B cell (primary cell): ENCODE measurements at regions of chr3 and their contacts with region 1.

Region 1: GRCh38 chr3:150763122-150763841 is at the start of gene SIAH2:
- DNase-seq: peak; percentile 95
- ATAC-seq: peak; percentile 74
- H3K4me3 ChIP-seq: peak within 1 kb of the TSS; percentile 74 to 91 (median 86)
- H3K4me3 Mint-ChIP-seq: peak within 1 kb of the TSS; percentile 99
- H3K27ac ChIP-seq: peak within 1 kb of the TSS; percentile 95 to 96
- H3K27ac Mint-ChIP-seq: peak within 1 kb of the TSS; percentile 99
- H3K4me1 ChIP-seq: peaks cover 51 to 56% of the 10 kb centered on the region in 2 donors
- H3K4me1 Mint-ChIP-seq: peaks cover 63% of the 10 kb centered on the region
- H3K27me3 ChIP-seq: peaks cover 0 to 2% (median 0%) of the 10 kb centered on the region in 4 experiments
- H3K27me3 Mint-ChIP-seq: peaks cover 4% of the 10 kb centered on the region
- CTCF ChIP-seq: no peak
- total RNA-seq, gene SIAH2: 22.3 and 22.5 TPM in 2 replicates

Region 2: GRCh38 chr3:149969940-149970715 is 793.2 kb before region 1 on chr3:
- CTCF ChIA-PET with region 1: no interaction called
- POLR2A ChIA-PET with region 1: no interaction called
- intact Hi-C with region 1: loop called (anchors 5 kb)
- DNase-seq: peak; percentile 87
- ATAC-seq: peak; percentile 71
- H3K4me3 ChIP-seq: peak overlapping the region; percentile 35 to 78 (median 67)
- H3K4me3 Mint-ChIP-seq: peak overlapping the region; percentile 96
- H3K27ac ChIP-seq: no peak overlapping the region
- H3K27ac Mint-ChIP-seq: peak overlapping the region; percentile 83
- H3K4me1 ChIP-seq: peaks cover 14% of the 10 kb centered on the region in 2 donors
- H3K4me1 Mint-ChIP-seq: peaks cover 22% of the 10 kb centered on the region
- H3K27me3 ChIP-seq: peaks cover 0 to 15% (median 14%) of the 10 kb centered on the region in 4 experiments
- H3K27me3 Mint-ChIP-seq: peaks cover 27% of the 10 kb centered on the region
- CTCF ChIP-seq: no peak

Region 3: GRCh38 chr3:150603153-150603979 is 159.9 kb before region 1 on chr3 and contains the start of gene SELENOT:
- CTCF ChIA-PET with region 1: no interaction called
- POLR2A ChIA-PET with region 1: interaction called, 4 read pairs
- intact Hi-C with region 1: loop called (anchors 1 kb)
- DNase-seq: peak; percentile 97
- ATAC-seq: peak; percentile 70
- H3K4me3 ChIP-seq: peak within 1 kb of the TSS; percentile 66 to 90 (median 87)
- H3K4me3 Mint-ChIP-seq: peak within 1 kb of the TSS; percentile 95
- H3K27ac ChIP-seq: peak within 1 kb of the TSS; percentile 99 to 100
- H3K27ac Mint-ChIP-seq: peak within 1 kb of the TSS; percentile 100
- H3K4me1 ChIP-seq: peaks cover 66 to 69% of the 10 kb centered on the region in 2 donors
- H3K4me1 Mint-ChIP-seq: peaks cover 84% of the 10 kb centered on the region
- H3K27me3 ChIP-seq: no peaks in the 10 kb centered on the region
- H3K27me3 Mint-ChIP-seq: no peaks in the 10 kb centered on the region
- CTCF ChIP-seq: peak; percentile 38
- total RNA-seq, gene SELENOT: 73.1 and 76.7 TPM in 2 replicates

Region 4: DNA sequence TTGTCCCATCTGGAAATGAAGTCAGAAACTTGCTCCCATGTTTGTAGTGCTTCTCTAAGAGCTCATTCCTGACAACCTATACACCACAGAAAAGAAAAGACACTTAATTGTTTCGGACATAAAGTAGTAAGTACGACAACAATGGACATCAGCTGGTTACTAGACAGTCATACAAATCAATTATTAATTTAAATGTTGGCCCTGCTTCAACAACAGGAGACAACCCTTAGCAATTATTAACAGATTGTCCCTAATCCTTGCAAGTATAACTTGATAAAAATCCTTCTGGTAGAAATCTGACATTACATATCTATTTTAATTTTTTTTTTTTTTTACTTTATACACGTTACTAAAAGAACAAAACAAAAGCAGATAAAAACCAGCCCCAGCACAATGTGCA is 89.3 kb before region 1 on chr3:
- CTCF ChIA-PET with region 1: no interaction called
- POLR2A ChIA-PET with region 1: no interaction called
- intact Hi-C with region 1: no loop called
- DNase-seq: no peak
- ATAC-seq: no peak
- H3K4me3 ChIP-seq: no peak overlapping the region
- H3K4me3 Mint-ChIP-seq: no peak overlapping the region
- H3K27ac ChIP-seq: no peak overlapping the region
- H3K27ac Mint-ChIP-seq: no peak overlapping the region
- H3K4me1 ChIP-seq: no peaks in the 10 kb centered on the region
- H3K4me1 Mint-ChIP-seq: no peaks in the 10 kb centered on the region
- H3K27me3 ChIP-seq: no peaks in the 10 kb centered on the region
- H3K27me3 Mint-ChIP-seq: no peaks in the 10 kb centered on the region
- CTCF ChIP-seq: no peak

Region 5: DNA sequence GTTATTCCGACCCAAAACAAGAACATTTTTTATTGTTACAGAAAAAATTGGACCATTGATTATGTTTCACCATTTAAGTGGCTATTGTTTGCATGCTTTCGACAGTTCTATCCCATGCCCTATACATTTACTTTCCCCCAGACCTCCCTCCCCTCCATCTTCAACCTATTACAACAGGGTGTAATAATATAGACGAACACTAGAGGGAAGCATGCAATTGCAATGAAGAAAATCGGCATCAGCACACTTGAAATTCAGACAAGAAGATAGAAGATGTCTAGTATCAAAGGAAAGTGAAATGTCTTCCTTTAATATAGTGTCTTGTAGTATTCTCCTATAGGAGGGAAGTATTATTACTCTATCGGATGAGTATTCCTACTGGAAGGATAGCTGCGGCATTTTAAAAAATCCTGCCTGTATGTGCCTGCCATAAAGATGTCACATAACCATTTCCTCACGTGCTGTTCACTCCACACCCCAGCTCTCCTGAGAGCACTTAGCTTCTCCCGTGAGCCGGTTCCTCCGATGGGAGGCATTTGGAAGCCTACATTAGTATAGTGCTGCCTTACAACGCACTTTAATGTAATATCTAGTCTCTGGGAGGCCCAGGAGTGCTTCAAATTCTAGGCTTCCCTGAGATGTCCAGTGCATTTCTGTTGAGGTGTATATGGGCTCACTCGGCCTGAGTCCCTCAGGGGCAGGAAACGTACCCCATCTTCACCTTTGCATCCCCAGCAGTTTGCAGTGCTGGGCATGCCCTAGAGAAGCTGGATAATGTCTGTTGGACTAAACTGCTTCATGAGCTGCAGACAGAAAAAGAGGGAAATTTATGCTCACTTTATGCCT is 41.8 kb before region 1 on chr3:
- CTCF ChIA-PET with region 1: interaction called, 32 read pairs
- POLR2A ChIA-PET with region 1: no interaction called
- intact Hi-C with region 1: loop called (anchors 1 kb)
- DNase-seq: peak; percentile 82
- ATAC-seq: peak; percentile 95
- H3K4me3 ChIP-seq: no peak overlapping the region
- H3K4me3 Mint-ChIP-seq: no peak overlapping the region
- H3K27ac ChIP-seq: no peak overlapping the region
- H3K27ac Mint-ChIP-seq: no peak overlapping the region
- H3K4me1 ChIP-seq: peaks cover 0 to 5% of the 10 kb centered on the region in 2 donors
- H3K4me1 Mint-ChIP-seq: peaks cover 2% of the 10 kb centered on the region
- H3K27me3 ChIP-seq: no peaks in the 10 kb centered on the region
- H3K27me3 Mint-ChIP-seq: no peaks in the 10 kb centered on the region
- CTCF ChIP-seq: peak; percentile 89

Region 6: GRCh38 chr3:150787741-150788370 is 24.6 kb after region 1 on chr3:
- CTCF ChIA-PET with region 1: interaction called, 20 read pairs
- POLR2A ChIA-PET with region 1: no interaction called
- intact Hi-C with region 1: loop called (anchors 2 kb)
- DNase-seq: peak; percentile 81
- ATAC-seq: peak; percentile 87
- H3K4me3 ChIP-seq: peak overlapping the region in 1 of 5 experiments; percentile 17
- H3K4me3 Mint-ChIP-seq: no peak overlapping the region
- H3K27ac ChIP-seq: no peak overlapping the region
- H3K27ac Mint-ChIP-seq: no peak overlapping the region
- H3K4me1 ChIP-seq: no peaks in the 10 kb centered on the region
- H3K4me1 Mint-ChIP-seq: peaks cover 6% of the 10 kb centered on the region
- H3K27me3 ChIP-seq: peaks cover 0 to 5% (median 1%) of the 10 kb centered on the region in 4 experiments
- H3K27me3 Mint-ChIP-seq: peaks cover 16% of the 10 kb centered on the region
- CTCF ChIP-seq: peak; percentile 95

Region 7: DNA sequence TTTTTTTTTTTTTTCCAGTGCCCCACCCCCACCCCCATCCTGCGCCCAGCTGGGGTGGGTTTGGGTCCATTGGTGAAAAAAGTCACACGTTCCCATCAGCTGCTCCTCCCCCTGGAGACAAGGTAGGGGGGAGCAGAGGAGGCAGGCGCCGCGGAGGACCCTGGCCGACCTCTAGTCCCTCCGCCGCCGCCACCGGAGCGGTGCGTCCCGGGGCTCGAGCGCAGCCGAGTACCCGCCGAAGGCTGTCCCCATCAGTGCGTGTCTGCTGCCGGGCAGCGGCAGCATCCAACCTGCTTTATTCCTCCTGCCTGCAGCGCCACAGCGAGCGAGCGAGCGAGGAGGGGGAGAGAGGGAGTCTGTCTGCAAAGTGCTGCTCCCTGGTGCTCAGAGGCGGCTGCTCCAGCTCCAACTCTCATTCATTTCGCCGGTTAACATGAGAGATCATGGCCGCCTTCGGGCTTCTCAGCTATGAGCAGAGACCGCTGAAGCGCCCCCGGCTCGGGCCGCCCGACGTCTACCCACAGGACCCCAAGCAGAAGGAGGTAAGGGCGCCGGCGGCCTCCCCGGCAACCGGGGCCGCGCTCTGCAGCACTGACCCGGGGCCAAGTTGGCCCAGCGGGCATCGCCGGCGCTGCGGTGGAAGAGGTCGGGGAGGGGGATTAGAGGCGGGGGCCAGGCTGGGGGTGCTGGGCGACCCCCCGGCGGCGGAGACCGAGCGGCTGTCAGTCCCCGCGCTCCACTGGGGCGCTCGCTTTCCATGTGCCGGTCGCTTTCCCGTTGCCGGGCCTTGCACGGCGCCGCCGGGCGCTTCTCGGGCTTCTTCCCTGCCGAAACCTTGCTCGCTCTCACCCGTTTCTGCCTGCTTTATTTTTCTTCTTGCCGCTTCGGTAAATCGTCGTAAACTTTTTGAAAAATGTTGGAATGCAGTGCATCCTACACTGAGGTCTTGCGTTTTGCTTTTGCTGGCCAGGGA is 323.5 kb after region 1 on chr3:
- CTCF ChIA-PET with region 1: no interaction called
- POLR2A ChIA-PET with region 1: no interaction called
- intact Hi-C with region 1: loop called (anchors 10 kb)
- DNase-seq: peak; percentile 71
- ATAC-seq: peak; percentile 67
- H3K4me3 ChIP-seq: peak overlapping the region; percentile 17 to 64 (median 54)
- H3K4me3 Mint-ChIP-seq: peak overlapping the region; percentile 90
- H3K27ac ChIP-seq: no peak overlapping the region
- H3K27ac Mint-ChIP-seq: peak overlapping the region; percentile 61
- H3K4me1 ChIP-seq: peaks cover 15 to 20% of the 10 kb centered on the region in 2 donors
- H3K4me1 Mint-ChIP-seq: peaks cover 15% of the 10 kb centered on the region
- H3K27me3 ChIP-seq: peaks cover 0 to 55% (median 28%) of the 10 kb centered on the region in 4 experiments
- H3K27me3 Mint-ChIP-seq: peaks cover 42% of the 10 kb centered on the region
- CTCF ChIP-seq: no peak

Region 8: GRCh38 chr3:151384741-151385174 is 621.5 kb after region 1 on chr3 and contains the start of gene P2RY12:
- CTCF ChIA-PET with region 1: no interaction called
- POLR2A ChIA-PET with region 1: interaction called, 3 read pairs
- intact Hi-C with region 1: loop called (anchors 5 kb)
- DNase-seq: peak; percentile 62
- ATAC-seq: peak; percentile 24
- H3K4me3 ChIP-seq: peak within 1 kb of the TSS in 4 of 5 experiments; percentile 18 to 53 (median 35)
- H3K4me3 Mint-ChIP-seq: peak within 1 kb of the TSS; percentile 81
- H3K27ac ChIP-seq: peak within 1 kb of the TSS; percentile 59 to 87
- H3K27ac Mint-ChIP-seq: peak within 1 kb of the TSS; percentile 85
- H3K4me1 ChIP-seq: peaks cover 55 to 63% of the 10 kb centered on the region in 2 donors
- H3K4me1 Mint-ChIP-seq: peaks cover 64% of the 10 kb centered on the region
- H3K27me3 ChIP-seq: no peaks in the 10 kb centered on the region
- H3K27me3 Mint-ChIP-seq: no peaks in the 10 kb centered on the region
- CTCF ChIP-seq: no peak
- total RNA-seq, gene P2RY12: 0.73 and 0.79 TPM in 2 replicates